ENCODE measurements at regions of chr7 and their contacts with region 1.

Region 1: DNA sequence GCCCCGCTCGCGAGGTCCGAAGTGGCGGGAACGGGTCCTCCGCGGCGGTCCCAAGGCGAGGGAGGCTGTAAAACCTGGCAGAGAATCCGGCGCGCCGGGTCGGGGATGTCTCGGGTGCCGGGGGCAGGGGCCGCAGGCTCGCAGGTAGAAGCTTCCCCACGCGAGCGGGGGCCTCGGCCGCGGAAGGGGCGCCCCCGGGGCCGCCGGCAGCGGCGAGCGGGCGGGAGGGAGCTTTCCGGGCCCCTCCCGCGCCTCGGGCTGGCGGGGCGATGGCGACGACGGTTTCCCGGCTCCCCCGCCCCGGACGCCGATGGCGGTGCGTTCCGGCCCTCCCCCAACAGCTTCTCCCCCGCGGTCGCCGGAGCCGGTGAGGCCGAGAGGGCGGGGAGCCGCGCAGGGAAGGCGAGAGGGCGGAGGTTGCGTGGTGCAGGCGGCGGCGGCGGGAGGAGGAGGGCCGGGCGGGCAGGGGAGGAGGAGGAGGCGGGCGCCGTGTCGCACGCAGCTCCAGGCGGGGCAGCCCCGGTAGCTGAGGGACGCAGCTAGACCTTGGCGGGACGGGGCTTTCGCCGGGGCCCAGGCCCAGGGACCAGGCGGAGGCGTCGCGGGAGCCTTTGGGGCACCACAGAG is at the start of gene CUL1:
- DNase-seq: peak; percentile 91 to 96
- ATAC-seq: peak; percentile 93
- H3K4me3 ChIP-seq: peak within 1 kb of the TSS; percentile 99 to 100
- H3K27ac ChIP-seq: peak within 1 kb of the TSS; percentile 83 to 99
- H3K4me1 ChIP-seq: peaks cover 5 to 7% of the 10 kb centered on the region in 2 donors
- H3K27me3 ChIP-seq: no peaks in the 10 kb centered on the region
- total RNA-seq, gene CUL1: 43.8 to 49.7 TPM

Region 2: DNA sequence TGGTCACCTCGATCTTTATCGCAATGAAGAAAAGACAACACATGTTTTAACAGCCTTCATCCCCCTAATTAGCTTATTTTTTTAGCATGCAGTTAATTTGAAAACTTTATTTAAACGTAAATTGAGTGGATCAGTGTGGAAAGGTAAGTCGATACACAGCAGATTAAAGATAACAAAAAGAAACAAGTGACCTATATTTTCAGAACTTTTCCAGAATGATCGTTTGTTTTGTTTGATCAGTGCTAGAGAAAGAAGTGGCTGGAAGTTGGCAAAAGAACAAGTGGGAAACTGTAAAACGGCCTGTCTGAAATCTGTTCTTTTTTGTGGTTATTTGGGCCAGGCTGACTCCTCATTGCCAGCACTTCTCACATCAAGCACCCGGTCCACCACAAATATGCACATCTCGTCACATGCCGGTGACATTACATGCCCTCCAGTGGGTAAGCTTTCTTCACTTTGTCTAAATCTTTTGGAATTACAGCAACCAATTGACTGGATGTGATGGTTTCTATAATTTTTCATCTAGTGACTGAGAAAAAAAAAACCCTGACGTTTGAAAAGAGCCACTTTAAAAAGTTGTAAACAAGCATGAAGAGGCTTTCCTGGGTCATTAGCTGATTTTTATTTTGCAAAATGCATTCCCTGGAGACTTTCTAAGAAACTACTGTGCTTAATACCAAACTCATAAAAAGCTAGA is 74.8 kb before region 1 on chr7:
- intact Hi-C with region 1: no loop called
- DNase-seq: no peak
- ATAC-seq: no peak
- H3K4me3 ChIP-seq: no peak overlapping the region
- H3K27ac ChIP-seq: no peak overlapping the region
- H3K4me1 ChIP-seq: no peaks in the 10 kb centered on the region
- H3K27me3 ChIP-seq: no peaks in the 10 kb centered on the region

Region 3: DNA sequence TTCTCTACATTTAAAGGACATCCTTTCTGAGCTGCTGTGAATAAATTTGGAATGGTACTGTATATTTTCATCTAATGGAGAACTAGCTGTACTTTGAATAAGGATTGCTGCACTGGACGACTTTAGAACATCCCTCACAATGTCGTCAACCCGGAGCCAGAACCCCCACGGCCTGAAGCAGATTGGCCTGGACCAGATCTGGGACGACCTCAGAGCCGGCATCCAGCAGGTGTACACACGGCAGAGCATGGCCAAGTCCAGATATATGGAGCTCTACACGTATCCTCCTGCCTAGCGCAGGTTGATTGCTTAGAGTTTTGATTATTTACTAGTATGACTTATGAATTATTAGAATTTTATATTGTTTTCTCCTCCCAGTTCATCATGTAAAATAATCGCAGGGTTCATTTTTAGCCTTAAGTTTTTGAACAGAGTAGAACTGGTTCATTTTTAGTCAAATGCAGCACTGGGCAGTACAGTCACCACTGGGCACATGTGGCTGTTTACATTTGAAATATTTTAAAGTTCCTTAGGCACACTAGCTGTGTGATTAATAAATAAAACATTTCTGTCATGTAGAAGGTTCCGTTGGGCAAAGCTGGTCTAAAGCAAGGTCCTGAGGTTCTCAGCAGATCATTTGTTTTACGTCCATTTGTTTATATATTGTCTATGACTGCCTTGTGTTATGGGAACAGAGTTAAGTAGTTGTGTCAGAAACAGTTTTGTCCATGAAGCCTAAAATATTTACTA is 31.6 kb after region 1 on chr7:
- intact Hi-C with region 1: loop called (anchors 5 kb)
- DNase-seq: no peak
- ATAC-seq: no peak
- H3K4me3 ChIP-seq: no peak overlapping the region
- H3K27ac ChIP-seq: peak overlapping the region in 1 of 2 donors; percentile 23
- H3K4me1 ChIP-seq: peaks cover 4 to 5% of the 10 kb centered on the region in 2 donors
- H3K27me3 ChIP-seq: no peaks in the 10 kb centered on the region

Region 4: DNA sequence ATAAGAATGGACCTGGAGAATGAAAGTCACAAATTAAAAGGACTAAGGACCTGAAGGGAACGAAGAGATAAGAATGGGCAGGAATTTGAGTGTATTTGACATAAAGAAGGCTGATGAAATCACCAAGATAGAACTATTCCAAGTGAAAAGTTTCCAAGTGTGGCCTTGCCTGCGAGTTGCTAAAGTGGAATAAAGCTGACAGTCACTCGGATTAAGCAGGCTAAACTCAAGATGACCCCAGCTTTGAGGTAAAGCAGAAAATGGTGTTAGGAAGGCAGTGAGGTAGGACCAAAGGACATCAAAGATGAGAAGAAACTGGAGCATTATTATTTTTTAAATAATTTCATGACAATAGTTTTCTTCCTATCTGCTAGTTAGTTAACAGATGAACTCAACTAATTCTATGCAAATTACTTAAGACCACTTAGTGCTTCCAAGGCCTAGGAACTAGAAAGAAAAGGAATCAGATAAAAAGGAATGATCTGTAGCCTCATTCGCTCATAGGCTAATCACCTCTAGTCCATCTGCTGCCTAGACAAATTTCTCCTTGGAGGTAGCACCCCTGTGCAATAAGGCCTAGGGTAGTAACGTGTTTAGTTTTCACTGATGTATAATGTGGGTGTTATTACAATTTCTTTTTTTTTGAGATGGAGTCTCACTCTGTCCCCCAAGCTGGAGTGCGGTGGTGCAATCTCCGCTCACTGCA is 151.0 kb after region 1 on chr7:
- intact Hi-C with region 1: no loop called
- DNase-seq: no peak
- ATAC-seq: no peak
- H3K4me3 ChIP-seq: no peak overlapping the region
- H3K27ac ChIP-seq: no peak overlapping the region
- H3K4me1 ChIP-seq: no peaks in the 10 kb centered on the region
- H3K27me3 ChIP-seq: no peaks in the 10 kb centered on the region

Region 5: GRCh38 chr7:148884299-148885022 is 186.0 kb after region 1 on chr7:
- intact Hi-C with region 1: loop called in 1 of 2 experiments (anchors 10 kb)
- DNase-seq: peak; percentile 95 to 97
- ATAC-seq: peak; percentile 99
- H3K4me3 ChIP-seq: peak overlapping the region; percentile 68 to 98
- H3K27ac ChIP-seq: peak overlapping the region in 1 of 2 donors; percentile 81
- H3K4me1 ChIP-seq: no peaks in the 10 kb centered on the region
- H3K27me3 ChIP-seq: no peaks in the 10 kb centered on the region

Region 6: DNA sequence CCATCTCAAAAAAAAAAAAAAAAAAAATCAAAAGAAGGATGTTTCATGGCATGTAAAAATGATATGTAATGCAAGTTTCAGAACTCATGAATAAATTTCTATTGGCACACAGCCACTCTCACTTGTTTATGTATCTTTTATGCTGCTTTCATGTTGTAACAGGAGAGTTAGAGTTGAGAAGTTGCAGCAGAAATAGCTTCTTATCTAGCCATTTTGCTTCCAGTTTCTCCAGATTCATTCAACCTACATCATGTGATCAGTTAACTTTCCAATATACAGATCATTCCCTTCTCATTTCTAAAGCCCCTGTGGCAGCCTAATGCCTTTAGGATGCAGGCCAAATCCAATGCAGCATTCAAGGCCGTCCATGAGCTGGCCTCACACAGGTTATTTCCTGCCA is 361.6 kb after region 1 on chr7:
- intact Hi-C with region 1: no loop called
- DNase-seq: no peak
- ATAC-seq: no peak
- H3K4me3 ChIP-seq: no peak overlapping the region
- H3K27ac ChIP-seq: no peak overlapping the region
- H3K4me1 ChIP-seq: no peaks in the 10 kb centered on the region
- H3K27me3 ChIP-seq: no peaks in the 10 kb centered on the region